Activated CD4-positive, alpha-beta T cell treated with anti-CD3 and anti-CD28 coated beads, Interleukin-2, amount 10 ng/mL, durations not matched to agents 24 days and 14 days (primary cell): ENCODE measurements at regions of chr2 and their contacts with region 1.

Region 1: GRCh38 chr2:676632-677055 is 562 bp downstream of the TMEM18 start:
- DNase-seq: peak; percentile 99
- H3K4me3 Mint-ChIP-seq: peak overlapping the region; percentile 96
- H3K27ac Mint-ChIP-seq: peak overlapping the region; percentile 97
- H3K4me1 Mint-ChIP-seq: peaks cover 36% of the 10 kb centered on the region
- H3K27me3 Mint-ChIP-seq: no peaks in the 10 kb centered on the region

Region 2: GRCh38 chr2:264660-265468 is 411.8 kb before region 1 on chr2 and contains the start of gene ACP1:
- intact Hi-C with region 1: loop called (anchors 1 kb)
- DNase-seq: peak; percentile 99
- H3K4me3 Mint-ChIP-seq: peak within 1 kb of the TSS; percentile 97
- H3K27ac Mint-ChIP-seq: peak within 1 kb of the TSS; percentile 97
- H3K4me1 Mint-ChIP-seq: peaks cover 40% of the 10 kb centered on the region
- H3K27me3 Mint-ChIP-seq: no peaks in the 10 kb centered on the region
- total RNA-seq, gene ACP1: 124 and 127 TPM in 2 replicates

Region 3: DNA sequence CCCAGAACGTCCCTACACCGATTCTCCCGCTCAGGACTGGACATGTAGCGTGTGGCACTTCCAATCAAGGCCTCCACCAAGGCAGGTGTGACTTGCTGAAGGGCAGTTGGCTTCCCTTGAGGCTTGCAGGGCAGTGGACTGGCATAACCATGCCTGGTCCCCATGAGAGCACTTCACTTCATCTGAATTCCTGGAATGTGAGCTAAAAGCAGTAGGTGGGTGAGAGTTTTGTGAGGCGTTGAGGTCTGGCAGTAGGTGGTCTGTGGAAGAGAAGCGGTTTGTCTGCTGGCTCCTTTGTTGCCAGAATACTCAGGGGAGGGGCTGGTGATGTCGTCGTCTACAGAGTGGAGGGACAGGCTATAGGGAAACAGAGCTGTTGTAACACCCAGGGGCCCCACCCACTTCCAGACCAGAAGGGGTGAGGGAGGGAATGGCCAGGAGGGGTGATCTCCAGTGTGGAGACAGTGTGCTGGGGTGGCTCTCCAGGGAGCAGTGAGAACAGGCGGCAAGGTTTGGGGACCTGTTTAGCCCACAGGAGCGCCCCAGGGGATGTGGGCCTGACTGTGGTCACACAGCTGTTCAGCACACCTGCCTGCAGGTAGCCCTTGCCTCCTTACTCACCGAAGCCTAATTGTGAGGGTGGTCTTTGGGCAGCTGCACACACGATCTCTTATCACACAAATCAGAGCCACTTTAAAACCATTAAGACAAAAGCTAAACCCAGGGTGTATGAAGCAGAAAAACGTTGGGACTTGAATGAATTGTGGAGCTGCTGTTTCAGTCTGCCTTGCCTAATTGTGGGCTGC is 367.3 kb before region 1 on chr2:
- intact Hi-C with region 1: no loop called
- DNase-seq: no peak
- H3K4me3 Mint-ChIP-seq: no peak overlapping the region
- H3K27ac Mint-ChIP-seq: no peak overlapping the region
- H3K4me1 Mint-ChIP-seq: no peaks in the 10 kb centered on the region
- H3K27me3 Mint-ChIP-seq: peaks cover 2% of the 10 kb centered on the region

Region 4: DNA sequence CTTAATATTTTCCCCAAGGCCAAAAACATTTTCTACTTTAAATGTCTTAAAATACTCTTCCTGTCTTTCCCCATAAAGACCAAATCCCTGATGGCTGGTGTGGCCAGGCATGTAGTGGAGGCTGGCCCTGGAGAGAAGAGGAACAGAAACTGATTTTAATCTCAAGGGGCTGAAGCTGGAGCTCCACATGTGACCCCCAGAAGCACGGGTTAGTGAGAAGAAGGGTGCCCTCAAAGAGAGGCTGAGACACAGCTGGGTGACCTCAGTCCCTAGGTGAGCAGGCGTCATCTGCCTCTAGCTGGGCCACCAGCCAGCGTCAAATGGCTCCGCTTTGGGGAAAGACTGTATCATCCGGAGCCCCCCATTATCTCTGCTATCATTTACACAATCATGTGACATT is 19.8 kb after region 1 on chr2:
- intact Hi-C with region 1: no loop called
- DNase-seq: no peak
- H3K4me3 Mint-ChIP-seq: no peak overlapping the region
- H3K27ac Mint-ChIP-seq: no peak overlapping the region
- H3K4me1 Mint-ChIP-seq: peaks cover 6% of the 10 kb centered on the region
- H3K27me3 Mint-ChIP-seq: peaks cover 8% of the 10 kb centered on the region

Region 5: DNA sequence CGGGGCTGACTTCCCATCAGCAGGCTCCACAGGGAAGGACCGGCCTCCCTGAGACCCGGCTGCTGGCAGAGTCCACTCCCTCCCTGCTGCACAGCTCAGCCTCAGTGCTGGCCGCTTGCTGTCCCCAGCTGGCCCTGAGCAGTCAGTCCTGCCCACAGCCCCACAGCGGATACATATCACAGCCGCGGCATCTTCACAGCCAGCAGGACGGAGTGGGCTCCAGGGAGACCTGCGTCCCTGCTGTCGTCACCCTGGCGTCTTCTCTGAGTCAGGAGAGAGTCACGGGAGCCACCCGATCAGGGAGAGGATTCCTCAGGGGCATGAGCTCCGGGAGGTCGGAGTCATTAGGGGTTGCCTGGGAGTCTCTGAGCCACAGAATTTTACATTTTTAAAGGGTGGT is 260.9 kb after region 1 on chr2:
- intact Hi-C with region 1: no loop called
- DNase-seq: no peak
- H3K4me3 Mint-ChIP-seq: no peak overlapping the region
- H3K27ac Mint-ChIP-seq: no peak overlapping the region
- H3K4me1 Mint-ChIP-seq: no peaks in the 10 kb centered on the region
- H3K27me3 Mint-ChIP-seq: no peaks in the 10 kb centered on the region